Activated CD4-positive, alpha-beta memory T cell treated with anti-CD3 and anti-CD28 coated beads, Interleukin-2, amount 10 ng/mL, durations not matched to agents 7 days and 5 days (primary cell): ENCODE measurements at regions of chr1 and their contacts with region 1.

Region 1: GRCh38 chr1:205791568-205792180 is 16.4 kb upstream of the RAB29 start:
- DNase-seq: peak; percentile 67
- H3K4me3 Mint-ChIP-seq: no peak overlapping the region
- H3K27ac Mint-ChIP-seq: no peak overlapping the region
- H3K4me1 Mint-ChIP-seq: peaks cover 5% of the 10 kb centered on the region
- H3K27me3 Mint-ChIP-seq: no peaks in the 10 kb centered on the region

Region 2: GRCh38 chr1:205805082-205805712 is 13.5 kb after region 1 on chr1:
- CTCF ChIA-PET with region 1: interaction called, 11 read pairs
- POLR2A ChIA-PET with region 1: no interaction called
- DNase-seq: peak; percentile 33
- H3K4me3 Mint-ChIP-seq: no peak overlapping the region
- H3K27ac Mint-ChIP-seq: peak overlapping the region; percentile 44
- H3K4me1 Mint-ChIP-seq: peaks cover 51% of the 10 kb centered on the region
- H3K27me3 Mint-ChIP-seq: no peaks in the 10 kb centered on the region

Region 3: DNA sequence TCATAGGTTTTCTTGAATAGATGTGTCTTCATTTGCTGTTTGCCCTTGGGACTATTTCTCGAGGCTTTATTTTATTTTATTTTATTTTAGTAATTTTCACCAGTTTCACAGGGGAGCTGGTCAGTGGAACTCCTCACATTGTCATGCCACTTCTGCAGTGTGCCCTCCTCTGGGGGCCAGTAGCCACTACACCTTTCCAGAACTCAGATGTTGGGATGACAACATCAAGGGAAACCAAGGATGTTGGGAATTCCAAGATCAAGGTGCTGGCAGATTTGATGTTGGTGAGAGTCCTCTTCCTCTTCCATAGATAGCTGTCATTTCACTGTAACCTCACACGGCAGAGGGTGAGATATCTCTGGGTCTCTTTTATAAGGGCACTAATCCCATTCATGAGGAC is 116.1 kb after region 1 on chr1:
- CTCF ChIA-PET with region 1: interaction called, 17 read pairs
- POLR2A ChIA-PET with region 1: no interaction called
- DNase-seq: no peak
- H3K4me3 Mint-ChIP-seq: no peak overlapping the region
- H3K27ac Mint-ChIP-seq: no peak overlapping the region
- H3K4me1 Mint-ChIP-seq: no peaks in the 10 kb centered on the region
- H3K27me3 Mint-ChIP-seq: peaks cover 26% of the 10 kb centered on the region

Region 4: GRCh38 chr1:205919026-205919746 is 127.5 kb after region 1 on chr1:
- CTCF ChIA-PET with region 1: interaction called, 21 read pairs
- POLR2A ChIA-PET with region 1: no interaction called
- DNase-seq: peak; percentile 75
- H3K4me3 Mint-ChIP-seq: no peak overlapping the region
- H3K27ac Mint-ChIP-seq: no peak overlapping the region
- H3K4me1 Mint-ChIP-seq: no peaks in the 10 kb centered on the region
- H3K27me3 Mint-ChIP-seq: peaks cover 1% of the 10 kb centered on the region